Aorta (tissue), 5 donors: ENCODE measurements at regions of chr3 and their contacts with region 1.

Region 1: GRCh38 chr3:127544192-127544802 is 46.2 kb downstream of the TPRA1 start:
- DNase-seq: peak; percentile 82 to 88
- ATAC-seq: peak; percentile 30
- H3K4me3 ChIP-seq: no peak overlapping the region
- H3K27ac ChIP-seq: no peak overlapping the region
- H3K4me1 ChIP-seq: no peaks in the 10 kb centered on the region
- H3K27me3 ChIP-seq: no peaks in the 10 kb centered on the region

Region 2: DNA sequence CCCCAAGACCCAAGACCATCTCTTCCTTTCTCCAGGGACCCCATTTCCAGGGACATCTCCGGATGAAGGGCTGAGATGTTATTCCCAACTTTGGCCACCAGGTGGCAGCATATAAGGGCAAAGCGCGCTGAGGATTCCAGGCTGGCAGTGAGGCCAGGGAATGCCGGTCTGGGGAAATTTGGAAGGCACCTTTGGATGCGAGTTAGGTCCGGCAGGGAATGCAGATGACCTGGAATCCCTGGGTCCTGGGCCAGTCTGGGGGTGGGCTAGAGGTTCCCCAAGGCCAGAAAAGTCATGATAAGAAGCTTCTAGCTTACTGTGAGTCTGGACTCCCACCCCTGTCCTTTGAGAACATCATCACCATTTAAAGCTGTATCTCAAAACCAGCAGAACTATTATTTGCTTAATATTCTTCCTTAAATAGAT is 1021.9 kb before region 1 on chr3:
- intact Hi-C with region 1: loop called (anchors 2 to 10 kb)
- DNase-seq: peak; percentile 62 to 84
- ATAC-seq: no peak
- H3K4me3 ChIP-seq: no peak overlapping the region
- H3K27ac ChIP-seq: no peak overlapping the region
- H3K4me1 ChIP-seq: no peaks in the 10 kb centered on the region
- H3K27me3 ChIP-seq: no peaks in the 10 kb centered on the region

Region 3: GRCh38 chr3:126746395-126747177 is 797.7 kb before region 1 on chr3:
- intact Hi-C with region 1: loop called (anchors 5 kb)
- DNase-seq: peak in 1 of 2 donors; percentile 79
- ATAC-seq: peak; percentile 74
- H3K4me3 ChIP-seq: no peak overlapping the region
- H3K27ac ChIP-seq: peak overlapping the region; percentile 53 to 88
- H3K4me1 ChIP-seq: peaks cover 4 to 5% of the 10 kb centered on the region in 2 donors
- H3K27me3 ChIP-seq: no peaks in the 10 kb centered on the region

Region 4: DNA sequence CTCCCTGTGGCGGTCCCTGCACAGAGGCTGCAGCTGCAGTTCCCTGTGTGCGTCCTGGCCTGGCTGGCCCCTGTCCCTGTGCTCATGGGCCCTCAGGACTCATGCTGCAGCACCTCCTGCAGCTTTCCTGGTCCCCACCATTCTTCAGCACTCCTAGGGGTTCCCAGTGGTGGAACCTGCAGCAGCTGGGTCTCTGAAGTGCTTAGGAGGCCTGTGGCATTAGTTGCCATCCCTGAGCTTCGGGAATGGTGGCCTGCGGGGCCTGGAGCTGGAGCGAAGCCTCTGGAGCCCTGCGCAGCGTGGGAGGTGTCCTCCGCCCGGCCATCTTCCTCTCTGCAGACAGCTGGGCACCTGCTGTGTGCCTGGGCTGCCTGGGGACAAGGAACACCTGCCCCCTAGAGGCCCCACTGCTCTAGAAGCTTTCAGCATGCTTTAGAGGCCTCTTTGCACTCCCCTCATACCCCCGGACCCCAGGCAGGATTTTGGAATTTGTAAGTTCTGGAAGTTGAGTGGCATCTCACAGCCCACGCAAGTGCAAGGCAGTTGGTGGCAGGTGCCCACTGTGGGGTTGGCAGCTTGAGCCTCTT is 548.3 kb before region 1 on chr3:
- intact Hi-C with region 1: loop called in 1 of 2 experiments (anchors 5 kb)
- DNase-seq: no peak
- ATAC-seq: no peak
- H3K4me3 ChIP-seq: no peak overlapping the region
- H3K27ac ChIP-seq: no peak overlapping the region
- H3K4me1 ChIP-seq: peaks cover 0 to 4% of the 10 kb centered on the region in 2 donors
- H3K27me3 ChIP-seq: no peaks in the 10 kb centered on the region

Region 5: DNA sequence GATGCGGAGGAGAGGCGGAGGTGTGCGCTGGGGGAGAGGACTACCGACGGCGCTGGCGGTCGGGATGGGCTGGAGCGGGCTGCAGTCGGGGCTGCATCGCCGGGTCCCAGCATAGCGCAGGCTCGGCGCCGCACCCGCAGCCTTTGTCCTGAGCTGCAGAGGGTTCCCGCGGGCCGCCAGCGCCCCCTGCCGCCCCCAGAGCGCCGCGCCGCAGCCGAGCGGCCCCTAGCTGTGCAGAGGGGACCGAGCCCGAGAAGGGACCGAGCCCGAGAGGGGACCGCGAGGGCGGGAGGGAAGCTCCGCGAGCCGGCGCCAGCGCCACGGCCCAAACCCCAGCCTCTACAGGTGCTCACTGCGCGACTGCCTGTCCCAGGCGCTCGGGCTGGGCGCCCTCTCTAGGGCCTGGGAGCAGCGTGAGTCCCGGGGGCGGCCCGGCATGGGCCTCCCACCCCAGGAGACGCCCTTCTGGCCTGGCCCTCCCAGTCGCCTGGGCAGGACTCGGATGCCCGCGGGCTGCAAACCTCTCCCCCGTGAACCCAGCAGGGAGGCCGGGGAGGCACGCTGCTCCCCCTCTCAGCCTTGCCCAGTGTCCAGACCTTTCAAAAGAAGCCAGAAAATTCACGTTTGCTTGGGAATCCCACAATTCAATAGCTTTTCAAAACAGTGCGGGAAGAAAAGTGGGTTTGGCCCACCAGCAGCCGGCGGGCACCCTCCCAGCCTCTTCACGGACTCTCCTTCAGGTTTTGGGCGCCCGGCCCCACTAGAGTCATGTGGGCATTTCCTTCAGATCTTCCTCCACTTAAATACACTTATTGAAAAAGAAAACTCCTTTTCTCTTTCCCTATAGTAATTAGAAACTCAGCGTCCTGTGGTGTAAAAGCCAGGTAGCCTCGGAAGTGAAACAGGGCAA is 88.5 kb before region 1 on chr3:
- intact Hi-C with region 1: loop called in 1 of 2 experiments (anchors 5 kb)
- DNase-seq: peak; percentile 73 to 92
- ATAC-seq: peak; percentile 89
- H3K4me3 ChIP-seq: no peak overlapping the region
- H3K27ac ChIP-seq: no peak overlapping the region
- H3K4me1 ChIP-seq: no peaks in the 10 kb centered on the region
- H3K27me3 ChIP-seq: no peaks in the 10 kb centered on the region

Region 6: DNA sequence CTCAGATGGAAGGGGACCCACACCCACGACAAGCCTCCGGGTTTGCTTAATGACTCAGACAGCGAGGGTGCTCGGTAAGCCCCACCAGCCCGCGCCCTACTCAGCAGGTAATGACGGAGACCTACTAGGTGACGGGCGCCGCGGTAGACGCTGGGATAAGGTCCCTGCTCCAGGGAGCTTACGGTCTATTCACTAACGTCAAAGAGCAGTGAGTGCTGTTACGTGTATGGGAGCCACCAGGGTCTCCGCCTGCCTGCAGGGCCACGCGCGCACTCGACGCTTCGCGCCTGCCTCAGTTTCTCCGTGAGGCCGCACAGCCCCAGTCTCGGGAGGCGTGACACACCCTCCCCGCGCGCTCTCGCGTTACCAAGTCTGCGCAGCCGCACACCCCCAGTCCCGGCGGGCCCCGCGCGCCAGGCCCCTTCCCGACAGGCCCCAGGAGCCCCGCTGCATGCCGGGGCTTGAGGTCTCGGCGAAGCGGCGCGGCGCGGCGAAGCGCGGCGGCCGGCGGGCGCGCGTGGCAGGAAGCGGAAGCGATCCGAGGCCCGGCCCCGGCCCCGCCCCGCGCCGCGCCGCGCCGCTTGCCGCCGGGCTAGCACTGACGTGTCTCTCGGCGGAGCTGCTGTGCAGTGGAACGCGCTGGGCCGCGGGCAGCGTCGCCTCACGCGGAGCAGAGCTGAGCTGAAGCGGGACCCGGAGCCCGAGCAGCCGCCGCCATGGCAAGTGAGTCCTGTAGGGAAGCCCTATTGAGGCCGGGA is 507.7 kb after region 1 on chr3 and contains the start of gene SEC61A1:
- intact Hi-C with region 1: no loop called
- DNase-seq: peak; percentile 97 to 98
- ATAC-seq: peak; percentile 98
- H3K4me3 ChIP-seq: peak within 1 kb of the TSS; percentile 62 to 99
- H3K27ac ChIP-seq: peak within 1 kb of the TSS; percentile 74 to 91
- H3K4me1 ChIP-seq: peaks cover 3 to 16% of the 10 kb centered on the region in 2 donors
- H3K27me3 ChIP-seq: no peaks in the 10 kb centered on the region
- total RNA-seq, gene SEC61A1: 156 to 172 TPM